PC-9 (cell line): ENCODE measurements at regions of chr11 and their contacts with region 1.

Region 1: GRCh38 chr11:73760679-73761402 is at the start of gene RAB6A:
- DNase-seq: peak; percentile 98 to 100
- H3K4me3 ChIP-seq: peak within 1 kb of the TSS; percentile 96
- H3K27ac ChIP-seq: peak within 1 kb of the TSS; percentile 58
- H3K4me1 ChIP-seq: peaks cover 24% of the 10 kb centered on the region
- H3K27me3 ChIP-seq: no peaks in the 10 kb centered on the region
- CTCF ChIP-seq: peak; percentile 35; the same call in 1 of the 2 replicates
- total RNA-seq, gene RAB6A: 134 and 142 TPM in 2 replicates

Region 2: GRCh38 chr11:73126804-73127480 is 633.9 kb before region 1 on chr11:
- CTCF ChIA-PET with region 1: no interaction called
- POLR2A ChIA-PET with region 1: interaction called, 10 read pairs
- intact Hi-C with region 1: no loop called
- DNase-seq: no peak
- H3K4me3 ChIP-seq: no peak overlapping the region
- H3K27ac ChIP-seq: no peak overlapping the region
- H3K4me1 ChIP-seq: no peaks in the 10 kb centered on the region
- H3K27me3 ChIP-seq: no peaks in the 10 kb centered on the region
- CTCF ChIP-seq: no peak

Region 3: GRCh38 chr11:73439002-73439843 is 321.6 kb before region 1 on chr11:
- CTCF ChIA-PET with region 1: no interaction called
- POLR2A ChIA-PET with region 1: interaction called, 19 read pairs
- intact Hi-C with region 1: no loop called
- DNase-seq: no peak
- H3K4me3 ChIP-seq: no peak overlapping the region
- H3K27ac ChIP-seq: no peak overlapping the region
- H3K4me1 ChIP-seq: no peaks in the 10 kb centered on the region
- H3K27me3 ChIP-seq: no peaks in the 10 kb centered on the region
- CTCF ChIP-seq: no peak

Region 4: DNA sequence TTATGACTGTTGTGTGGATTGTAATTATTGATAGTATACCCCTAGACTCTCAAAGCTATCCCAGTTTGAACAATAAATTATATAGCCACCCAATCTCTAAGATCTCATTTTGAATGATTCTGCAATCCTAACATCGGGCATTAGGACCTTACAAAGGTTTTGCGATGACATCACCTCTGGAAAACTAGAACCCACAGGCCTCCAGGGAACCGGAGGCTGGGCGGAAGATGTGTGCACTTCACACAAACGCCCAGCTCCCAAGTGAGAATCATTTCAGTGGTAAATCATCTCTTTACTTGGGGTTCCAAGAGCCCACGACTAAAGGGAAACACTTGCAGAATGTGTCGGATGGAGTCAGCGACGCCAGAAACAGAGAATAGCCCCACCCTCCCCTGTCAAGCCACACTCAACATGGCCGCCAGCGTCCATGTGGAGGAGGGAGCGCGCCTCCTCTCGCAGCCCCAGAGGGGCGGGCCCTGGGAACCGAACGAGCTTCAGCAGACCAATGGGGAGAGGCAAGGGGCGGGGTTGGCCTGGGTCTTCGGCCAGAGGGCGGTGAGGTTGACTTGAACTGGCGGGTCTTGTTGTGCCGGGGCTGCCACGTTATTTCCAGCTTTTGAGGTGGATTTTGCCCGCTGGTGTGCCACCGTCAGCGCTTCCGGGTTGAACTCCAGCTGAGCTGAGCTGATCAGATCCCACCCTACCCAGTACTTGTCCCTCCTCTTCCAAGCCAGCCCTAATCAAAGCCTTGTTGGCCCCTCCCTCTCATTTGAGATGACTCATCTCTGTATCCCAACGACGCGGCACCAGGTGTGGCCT is 18.5 kb after region 1 on chr11:
- CTCF ChIA-PET with region 1: interaction called, 3 read pairs
- POLR2A ChIA-PET with region 1: interaction called, 15 read pairs
- intact Hi-C with region 1: loop called (anchors 1 kb)
- DNase-seq: peak; percentile 99
- H3K4me3 ChIP-seq: peak overlapping the region; percentile 69
- H3K27ac ChIP-seq: peak overlapping the region; percentile 98
- H3K4me1 ChIP-seq: peaks cover 33% of the 10 kb centered on the region
- H3K27me3 ChIP-seq: no peaks in the 10 kb centered on the region
- CTCF ChIP-seq: no peak